Transverse colon (tissue), 4 donors: ENCODE measurements at regions of chr16 and their contacts with region 1.

Region 1: DNA sequence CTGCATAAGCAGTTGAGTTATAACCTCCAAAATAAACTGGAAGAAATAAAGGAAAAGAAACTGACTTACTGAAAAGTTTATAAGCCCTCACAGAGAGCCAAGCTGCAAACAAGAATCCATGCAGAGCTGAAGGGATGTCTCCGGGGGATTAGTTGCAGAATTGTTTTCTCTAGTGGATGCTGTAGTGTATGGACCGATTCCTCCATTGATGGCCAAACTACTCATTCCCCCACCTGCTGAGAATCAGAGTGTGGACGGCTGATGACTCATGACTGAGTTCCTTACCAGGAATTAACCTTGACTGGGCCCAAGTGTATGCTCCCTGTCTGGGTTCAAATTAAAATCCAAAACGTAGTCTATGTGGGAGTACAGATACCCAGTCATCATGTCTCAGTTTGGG is 93.9 kb upstream of the CDH8 start:
- DNase-seq: no peak
- H3K4me3 ChIP-seq: no peak overlapping the region
- H3K27ac ChIP-seq: no peak overlapping the region
- H3K4me1 ChIP-seq: no peaks in the 10 kb centered on the region
- H3K27me3 ChIP-seq: no peaks in the 10 kb centered on the region
- CTCF ChIP-seq: no peak
- EP300 ChIP-seq: no peak
- POLR2A ChIP-seq: no peak

Region 2: GRCh38 chr16:61987474-61988012 is 142.6 kb before region 1 on chr16:
- in situ Hi-C with region 1: no loop called
- intact Hi-C with region 1: no loop called
- DNase-seq: no peak
- H3K4me3 ChIP-seq: no peak overlapping the region
- H3K27ac ChIP-seq: no peak overlapping the region
- H3K4me1 ChIP-seq: no peaks in the 10 kb centered on the region
- H3K27me3 ChIP-seq: no peaks in the 10 kb centered on the region
- CTCF ChIP-seq: no peak
- EP300 ChIP-seq: no peak
- POLR2A ChIP-seq: no peak

Region 3: GRCh38 chr16:62190426-62190825 is 60.3 kb after region 1 on chr16:
- in situ Hi-C with region 1: loop called in 1 of 4 experiments (anchors 10 kb)
- intact Hi-C with region 1: no loop called
- DNase-seq: no peak
- H3K4me3 ChIP-seq: no peak overlapping the region
- H3K27ac ChIP-seq: no peak overlapping the region
- H3K4me1 ChIP-seq: no peaks in the 10 kb centered on the region
- H3K27me3 ChIP-seq: no peaks in the 10 kb centered on the region
- CTCF ChIP-seq: no peak
- EP300 ChIP-seq: no peak
- POLR2A ChIP-seq: no peak